CD4-positive, alpha-beta T cell (primary cell): ENCODE measurements at regions of chr12 and their contacts with region 1.

Region 1: GRCh38 chr12:119667577-119668323 is at the start of gene PRKAB1:
- DNase-seq: peak; percentile 87 to 99 (median 94)
- ATAC-seq: peak; percentile 88
- H3K4me3 ChIP-seq: peak within 1 kb of the TSS; percentile 90
- H3K4me3 Mint-ChIP-seq: peak within 1 kb of the TSS; percentile 92
- H3K27ac ChIP-seq: peak within 1 kb of the TSS; percentile 80 to 91
- H3K27ac Mint-ChIP-seq: peak within 1 kb of the TSS; percentile 93
- H3K4me1 ChIP-seq: peaks cover 24% of the 10 kb centered on the region
- H3K4me1 Mint-ChIP-seq: peaks cover 57% of the 10 kb centered on the region
- H3K27me3 ChIP-seq: no peaks in the 10 kb centered on the region
- H3K27me3 Mint-ChIP-seq: no peaks in the 10 kb centered on the region
- CTCF ChIP-seq: peak; percentile 96
- total RNA-seq, gene PRKAB1: 18.6 to 24.2 TPM

Region 2: DNA sequence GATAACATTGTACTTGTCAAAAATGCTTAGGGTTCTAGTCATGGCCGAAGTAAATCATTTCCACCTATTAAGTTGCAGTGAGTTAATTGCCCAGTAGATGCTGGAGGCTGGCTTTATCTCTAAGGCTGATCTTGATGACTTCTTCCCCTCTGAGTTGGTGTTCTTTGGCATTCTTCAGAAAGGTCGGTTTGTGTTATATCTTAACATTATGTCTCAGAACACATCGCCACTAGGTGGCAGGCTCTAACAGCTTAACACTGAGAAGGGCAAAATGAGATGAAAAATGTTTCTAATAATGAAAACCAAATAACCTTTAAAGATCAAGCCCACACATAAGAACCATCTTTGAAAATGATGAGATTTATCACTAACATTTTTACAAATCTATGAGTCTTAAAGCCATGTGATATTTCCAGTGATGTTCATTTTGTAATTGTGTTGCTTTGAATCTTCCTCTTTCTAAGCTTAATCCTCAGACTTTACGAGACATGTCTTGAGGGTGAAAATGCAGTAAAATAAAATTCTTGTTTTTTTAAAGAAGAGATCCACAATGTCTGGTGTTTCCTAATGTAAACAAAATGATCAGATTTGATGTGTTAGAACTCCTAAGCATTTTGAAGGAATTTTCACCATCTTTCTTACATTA is 1262.8 kb before region 1 on chr12:
- CTCF ChIA-PET with region 1: interaction called, 3 read pairs
- POLR2A ChIA-PET with region 1: no interaction called
- intact Hi-C with region 1: loop called in 1 of 2 experiments (anchors 2 kb)
- DNase-seq: peak; percentile 14 to 64 (median 36)
- ATAC-seq: peak; percentile 61
- H3K4me3 ChIP-seq: no peak overlapping the region
- H3K4me3 Mint-ChIP-seq: no peak overlapping the region
- H3K27ac ChIP-seq: no peak overlapping the region
- H3K27ac Mint-ChIP-seq: no peak overlapping the region
- H3K4me1 ChIP-seq: no peaks in the 10 kb centered on the region
- H3K4me1 Mint-ChIP-seq: no peaks in the 10 kb centered on the region
- H3K27me3 ChIP-seq: no peaks in the 10 kb centered on the region
- H3K27me3 Mint-ChIP-seq: no peaks in the 10 kb centered on the region
- CTCF ChIP-seq: peak; percentile 84

Region 3: GRCh38 chr12:119876761-119877638 is 209.2 kb after region 1 on chr12 and contains the start of gene CIT:
- CTCF ChIA-PET with region 1: no interaction called
- POLR2A ChIA-PET with region 1: no interaction called
- intact Hi-C with region 1: loop called in 1 of 2 experiments (anchors 10 kb)
- DNase-seq: peak; percentile 69 to 93 (median 82)
- ATAC-seq: peak; percentile 99
- H3K4me3 ChIP-seq: peak within 1 kb of the TSS; percentile 77
- H3K4me3 Mint-ChIP-seq: peak within 1 kb of the TSS; percentile 82
- H3K27ac ChIP-seq: no peak within 1 kb of the TSS
- H3K27ac Mint-ChIP-seq: no peak within 1 kb of the TSS
- H3K4me1 ChIP-seq: peaks cover 16% of the 10 kb centered on the region
- H3K4me1 Mint-ChIP-seq: peaks cover 7% of the 10 kb centered on the region
- H3K27me3 ChIP-seq: no peaks in the 10 kb centered on the region
- H3K27me3 Mint-ChIP-seq: no peaks in the 10 kb centered on the region
- CTCF ChIP-seq: no peak
- total RNA-seq, gene CIT: 1.3 to 1.9 TPM